GM10248 (cell line): ENCODE measurements at regions of chr14 and their contacts with region 1.

Region 1: GRCh38 chr14:31219169-31219568 is 11.6 kb upstream of the HECTD1 start:
- DNase-seq: no peak
- CTCF ChIP-seq: no peak

Region 2: GRCh38 chr14:31229638-31230229 is 10.6 kb after region 1 on chr14:
- CTCF ChIA-PET with region 1: interaction called, 18 read pairs
- POLR2A ChIA-PET with region 1: no interaction called
- DNase-seq: no peak
- CTCF ChIP-seq: no peak